Dorsolateral prefrontal cortex (tissue), 120 donors: ENCODE measurements at regions of chr9 and their contacts with region 1.

Region 1: GRCh38 chr9:122931226-122932121 is at the start of gene ZBTB26:
- DNase-seq: peak; percentile 89 to 97 (median 95)
- H3K4me3 ChIP-seq: peak within 1 kb of the TSS; percentile 71 to 99 (median 92)
- H3K27ac ChIP-seq: peak within 1 kb of the TSS in 58 of 59 donors; percentile 5 to 93 (median 82)
- H3K27me3 ChIP-seq: no peaks in the 10 kb centered on the region
- CTCF ChIP-seq: peak in 14 of 56 donors; percentile 7 to 37 (median 18)
- total RNA-seq, gene ZBTB26: 6.7 to 15.0 (median 9.6) TPM

Region 2: DNA sequence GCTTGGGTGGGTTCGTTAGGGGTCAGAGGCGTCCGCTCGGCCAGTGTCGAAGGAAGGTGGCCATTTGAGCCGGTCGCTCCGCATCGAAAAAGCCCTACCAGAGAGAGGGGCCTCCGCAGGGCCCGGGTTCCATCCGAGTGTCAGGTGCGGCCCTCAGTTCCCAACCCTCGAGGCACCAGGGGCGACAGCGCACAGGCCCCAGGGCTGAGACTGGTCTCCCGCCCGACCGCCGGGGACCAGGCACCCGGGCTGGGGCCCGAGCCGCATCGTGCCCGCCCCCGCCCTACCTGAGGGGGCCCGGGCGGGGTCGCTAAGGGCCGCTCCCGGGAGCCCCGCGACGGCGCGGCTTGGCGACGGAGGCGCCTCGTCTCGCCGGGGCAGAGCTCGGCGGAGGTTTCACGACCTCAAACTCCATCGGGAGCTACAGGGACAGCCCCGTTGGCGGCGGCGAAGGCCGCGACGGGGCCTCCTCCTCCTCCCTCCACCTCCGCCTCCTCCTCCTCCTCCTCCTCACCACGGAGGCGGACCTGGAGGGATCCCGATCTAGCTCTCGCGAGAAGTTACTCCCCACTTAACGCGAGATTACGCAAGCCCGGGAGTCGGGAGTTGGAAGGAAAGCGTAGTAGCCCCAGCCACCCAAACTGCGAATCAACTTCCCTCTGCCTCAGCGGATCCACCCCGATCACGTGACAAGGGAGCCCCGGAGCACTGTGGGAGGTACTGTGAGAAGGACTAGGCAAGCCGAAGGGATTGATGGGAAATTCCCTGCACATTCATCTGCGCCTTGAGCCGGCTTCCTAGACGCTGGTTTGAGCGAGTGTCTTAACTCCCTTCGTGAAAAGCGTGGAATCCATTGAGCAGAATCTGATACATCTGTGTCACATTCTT is 26.4 kb before region 1 on chr9 and contains the start of gene RC3H2:
- intact Hi-C with region 1: loop called in 1 of 2 experiments (anchors 1 kb)
- DNase-seq: peak; percentile 99 to 100 (median 100)
- H3K4me3 ChIP-seq: peak within 1 kb of the TSS; percentile 57 to 99 (median 90)
- H3K27ac ChIP-seq: peak within 1 kb of the TSS; percentile 85 to 99 (median 96)
- H3K27me3 ChIP-seq: no peaks in the 10 kb centered on the region
- CTCF ChIP-seq: peak in 17 of 56 donors; percentile 4 to 48 (median 23)
- total RNA-seq, gene RC3H2: 46.8 to 94.9 (median 69.0) TPM

Region 3: GRCh38 chr9:123112015-123112975 is 180.8 kb after region 1 on chr9:
- intact Hi-C with region 1: no loop called
- DNase-seq: peak in 3 of 10 donors; percentile 42 to 62 (median 52)
- H3K4me3 ChIP-seq: peak overlapping the region in 7 of 59 donors; percentile 2 to 25 (median 10)
- H3K27ac ChIP-seq: peak overlapping the region in 54 of 59 donors; percentile 18 to 84 (median 64)
- H3K27me3 ChIP-seq: no peaks in the 10 kb centered on the region
- CTCF ChIP-seq: no peak